ENCODE measurements at regions of chr11 and their contacts with region 1.

Region 1: GRCh38 chr11:124788521-124788920 is 11.7 kb downstream of the MSANTD2 start:
- DNase-seq: no peak
- ATAC-seq: peak; percentile 13
- H3K4me3 ChIP-seq: no peak overlapping the region
- H3K27ac ChIP-seq: no peak overlapping the region
- H3K4me1 ChIP-seq: peaks cover 17% of the 10 kb centered on the region
- H3K27me3 ChIP-seq: no peaks in the 10 kb centered on the region
- CTCF ChIP-seq: no peak

Region 2: GRCh38 chr11:124693142-124693541 is 95.4 kb before region 1 on chr11:
- CTCF ChIA-PET with region 1: no interaction called
- POLR2A ChIA-PET with region 1: interaction called, 12 read pairs
- intact Hi-C with region 1: no loop called
- DNase-seq: no peak
- ATAC-seq: peak; percentile 50; the same call in 1 of the 2 replicates
- H3K4me3 ChIP-seq: no peak overlapping the region
- H3K27ac ChIP-seq: no peak overlapping the region
- H3K4me1 ChIP-seq: no peaks in the 10 kb centered on the region
- H3K27me3 ChIP-seq: no peaks in the 10 kb centered on the region
- CTCF ChIP-seq: no peak

Region 3: GRCh38 chr11:125902927-125903710 is 1114.6 kb after region 1 on chr11 and contains the start of gene PUS3:
- CTCF ChIA-PET with region 1: interaction called, 12 read pairs
- POLR2A ChIA-PET with region 1: no interaction called
- intact Hi-C with region 1: no loop called
- DNase-seq: peak; percentile 90
- ATAC-seq: peak; percentile 97
- H3K4me3 ChIP-seq: peak within 1 kb of the TSS; percentile 90
- H3K27ac ChIP-seq: peak within 1 kb of the TSS; percentile 42
- H3K4me1 ChIP-seq: peaks cover 7% of the 10 kb centered on the region
- H3K27me3 ChIP-seq: peaks cover 12% of the 10 kb centered on the region; the same call in 1 of the 2 replicates
- CTCF ChIP-seq: no peak
- total RNA-seq, gene PUS3: 10.3 and 26.2 TPM in 2 replicates